CD8-positive, alpha-beta T cell (primary cell): ENCODE measurements at regions of chr15 and their contacts with region 1.

Region 1: DNA sequence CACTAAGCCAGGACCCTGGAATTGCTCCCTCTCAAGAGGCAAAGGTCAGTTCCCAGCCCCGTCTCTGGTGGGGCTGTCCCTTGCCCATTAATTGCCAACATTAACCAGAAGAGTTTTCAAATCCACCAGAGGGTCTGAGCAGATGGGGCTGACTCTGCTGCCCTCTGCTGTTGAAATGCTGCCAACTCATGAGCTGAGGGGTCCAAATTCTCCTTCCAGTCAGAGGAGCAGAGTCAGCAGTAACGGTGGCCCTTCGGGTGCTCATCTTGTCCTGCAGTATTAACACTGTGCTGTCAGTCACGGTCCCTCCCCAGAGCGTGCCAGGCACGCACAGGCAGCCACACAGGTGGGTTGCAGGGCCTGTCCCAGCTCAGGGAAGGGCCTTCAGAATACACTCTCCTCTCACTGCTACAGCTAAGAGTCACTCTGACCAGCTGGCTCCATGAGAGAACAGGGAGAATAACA is 10.7 kb upstream of the SPTBN5 start:
- DNase-seq: peak; percentile 50 to 86 (median 76)
- ATAC-seq: peak; percentile 86
- H3K4me3 ChIP-seq: no peak overlapping the region
- H3K4me3 Mint-ChIP-seq: no peak overlapping the region
- H3K27ac ChIP-seq: no peak overlapping the region
- H3K27ac Mint-ChIP-seq: peak overlapping the region; percentile 57
- H3K4me1 ChIP-seq: peaks cover 3% of the 10 kb centered on the region
- H3K4me1 Mint-ChIP-seq: peaks cover 6% of the 10 kb centered on the region
- H3K27me3 ChIP-seq: no peaks in the 10 kb centered on the region
- H3K27me3 Mint-ChIP-seq: no peaks in the 10 kb centered on the region
- CTCF ChIP-seq: peak; percentile 92

Region 2: GRCh38 chr15:40906091-40906990 is 998.2 kb before region 1 on chr15:
- CTCF ChIA-PET with region 1: no interaction called
- POLR2A ChIA-PET with region 1: no interaction called
- intact Hi-C with region 1: loop called in 1 of 2 experiments (anchors 10 kb)
- DNase-seq: peak; percentile 50 to 84 (median 76)
- ATAC-seq: peak; percentile 63
- H3K4me3 ChIP-seq: peak overlapping the region; percentile 68 to 80
- H3K4me3 Mint-ChIP-seq: peak overlapping the region; percentile 83
- H3K27ac ChIP-seq: peak overlapping the region; percentile 19 to 82
- H3K27ac Mint-ChIP-seq: peak overlapping the region; percentile 87
- H3K4me1 ChIP-seq: peaks cover 18% of the 10 kb centered on the region
- H3K4me1 Mint-ChIP-seq: peaks cover 38% of the 10 kb centered on the region
- H3K27me3 ChIP-seq: no peaks in the 10 kb centered on the region
- H3K27me3 Mint-ChIP-seq: no peaks in the 10 kb centered on the region
- CTCF ChIP-seq: peak; percentile 85

Region 3: GRCh38 chr15:41557673-41558399 is 346.7 kb before region 1 on chr15:
- CTCF ChIA-PET with region 1: no interaction called
- POLR2A ChIA-PET with region 1: no interaction called
- intact Hi-C with region 1: loop called (anchors 1 to 5 kb)
- DNase-seq: peak; percentile 47 to 90 (median 77)
- ATAC-seq: peak; percentile 88
- H3K4me3 ChIP-seq: peak overlapping the region; percentile 4 to 41
- H3K4me3 Mint-ChIP-seq: peak overlapping the region; percentile 86
- H3K27ac ChIP-seq: peak overlapping the region in 1 of 2 experiments; percentile 69
- H3K27ac Mint-ChIP-seq: peak overlapping the region; percentile 84
- H3K4me1 ChIP-seq: peaks cover 19% of the 10 kb centered on the region
- H3K4me1 Mint-ChIP-seq: peaks cover 14% of the 10 kb centered on the region
- H3K27me3 ChIP-seq: peaks cover 6 to 10% of the 10 kb centered on the region in 2 experiments
- H3K27me3 Mint-ChIP-seq: peaks cover 18% of the 10 kb centered on the region
- CTCF ChIP-seq: peak; percentile 88

Region 4: GRCh38 chr15:41695750-41696426 is 208.7 kb before region 1 on chr15:
- CTCF ChIA-PET with region 1: interaction called, 4 read pairs
- POLR2A ChIA-PET with region 1: no interaction called
- intact Hi-C with region 1: loop called (anchors 1 to 10 kb)
- DNase-seq: peak; percentile 7 to 78 (median 41)
- ATAC-seq: peak; percentile 96
- H3K4me3 ChIP-seq: no peak overlapping the region
- H3K4me3 Mint-ChIP-seq: peak overlapping the region; percentile 29
- H3K27ac ChIP-seq: peak overlapping the region in 1 of 2 experiments; percentile 44
- H3K27ac Mint-ChIP-seq: peak overlapping the region; percentile 69
- H3K4me1 ChIP-seq: peaks cover 22% of the 10 kb centered on the region
- H3K4me1 Mint-ChIP-seq: peaks cover 54% of the 10 kb centered on the region
- H3K27me3 ChIP-seq: no peaks in the 10 kb centered on the region
- H3K27me3 Mint-ChIP-seq: no peaks in the 10 kb centered on the region
- CTCF ChIP-seq: peak; percentile 41

Region 5: GRCh38 chr15:41827880-41828806 is 76.4 kb before region 1 on chr15 and contains the start of gene JMJD7:
- CTCF ChIA-PET with region 1: interaction called, 19 read pairs
- POLR2A ChIA-PET with region 1: interaction called, 3 read pairs
- intact Hi-C with region 1: loop called (anchors 2 kb)
- DNase-seq: peak; percentile 93 to 98 (median 95)
- ATAC-seq: peak; percentile 97
- H3K4me3 ChIP-seq: peak within 1 kb of the TSS; percentile 93 to 95
- H3K4me3 Mint-ChIP-seq: peak within 1 kb of the TSS; percentile 83
- H3K27ac ChIP-seq: peak within 1 kb of the TSS; percentile 74 to 87
- H3K27ac Mint-ChIP-seq: peak within 1 kb of the TSS; percentile 87
- H3K4me1 ChIP-seq: peaks cover 35% of the 10 kb centered on the region
- H3K4me1 Mint-ChIP-seq: peaks cover 44% of the 10 kb centered on the region
- H3K27me3 ChIP-seq: no peaks in the 10 kb centered on the region
- H3K27me3 Mint-ChIP-seq: no peaks in the 10 kb centered on the region
- CTCF ChIP-seq: no peak
- total RNA-seq, gene JMJD7: 27.5 to 38.3 TPM

Region 6: GRCh38 chr15:41888662-41889253 is 15.8 kb before region 1 on chr15:
- CTCF ChIA-PET with region 1: interaction called, 16 read pairs
- POLR2A ChIA-PET with region 1: no interaction called
- intact Hi-C with region 1: no loop called
- DNase-seq: peak in 3 of 9 experiments; percentile 20 to 39 (median 24)
- ATAC-seq: no peak
- H3K4me3 ChIP-seq: no peak overlapping the region
- H3K4me3 Mint-ChIP-seq: no peak overlapping the region
- H3K27ac ChIP-seq: peak overlapping the region in 1 of 2 experiments; percentile 31
- H3K27ac Mint-ChIP-seq: no peak overlapping the region
- H3K4me1 ChIP-seq: peaks cover 26% of the 10 kb centered on the region
- H3K4me1 Mint-ChIP-seq: peaks cover 31% of the 10 kb centered on the region
- H3K27me3 ChIP-seq: no peaks in the 10 kb centered on the region
- H3K27me3 Mint-ChIP-seq: no peaks in the 10 kb centered on the region
- CTCF ChIP-seq: no peak

Region 7: GRCh38 chr15:41936649-41937567 is 32.3 kb after region 1 on chr15:
- CTCF ChIA-PET with region 1: interaction called, 26 read pairs
- POLR2A ChIA-PET with region 1: interaction called, 4 read pairs
- intact Hi-C with region 1: loop called in 1 of 2 experiments (anchors 2 kb)
- DNase-seq: peak; percentile 52 to 94 (median 74)
- ATAC-seq: peak; percentile 80
- H3K4me3 ChIP-seq: peak overlapping the region; percentile 9 to 27
- H3K4me3 Mint-ChIP-seq: peak overlapping the region; percentile 75
- H3K27ac ChIP-seq: peak overlapping the region; percentile 86 to 97
- H3K27ac Mint-ChIP-seq: peak overlapping the region; percentile 96
- H3K4me1 ChIP-seq: peaks cover 55% of the 10 kb centered on the region
- H3K4me1 Mint-ChIP-seq: peaks cover 58% of the 10 kb centered on the region
- H3K27me3 ChIP-seq: no peaks in the 10 kb centered on the region
- H3K27me3 Mint-ChIP-seq: no peaks in the 10 kb centered on the region
- CTCF ChIP-seq: peak; percentile 39

Region 8: GRCh38 chr15:41946970-41947369 is 42.4 kb after region 1 on chr15:
- CTCF ChIA-PET with region 1: no interaction called
- POLR2A ChIA-PET with region 1: no interaction called
- intact Hi-C with region 1: no loop called
- DNase-seq: no peak
- ATAC-seq: no peak
- H3K4me3 ChIP-seq: no peak overlapping the region
- H3K4me3 Mint-ChIP-seq: no peak overlapping the region
- H3K27ac ChIP-seq: no peak overlapping the region
- H3K27ac Mint-ChIP-seq: no peak overlapping the region
- H3K4me1 ChIP-seq: no peaks in the 10 kb centered on the region
- H3K4me1 Mint-ChIP-seq: peaks cover 3% of the 10 kb centered on the region
- H3K27me3 ChIP-seq: no peaks in the 10 kb centered on the region
- H3K27me3 Mint-ChIP-seq: no peaks in the 10 kb centered on the region
- CTCF ChIP-seq: no peak